CD4-positive, alpha-beta memory T cell (primary cell): ENCODE measurements at regions of chr5 and their contacts with region 1.

Region 1: GRCh38 chr5:142874537-142874936 is 104.4 kb downstream of the ARHGAP26 start:
- DNase-seq: no peak
- H3K4me3 ChIP-seq: no peak overlapping the region
- H3K4me3 Mint-ChIP-seq: no peak overlapping the region
- H3K27ac ChIP-seq: no peak overlapping the region
- H3K27ac Mint-ChIP-seq: no peak overlapping the region
- H3K4me1 ChIP-seq: no peaks in the 10 kb centered on the region
- H3K4me1 Mint-ChIP-seq: peaks cover 0 to 3% (median 0%) of the 10 kb centered on the region in 4 donors
- H3K27me3 ChIP-seq: no peaks in the 10 kb centered on the region
- H3K27me3 Mint-ChIP-seq: no peaks in the 10 kb centered on the region

Region 2: GRCh38 chr5:142888469-142889085 is 14.0 kb after region 1 on chr5:
- CTCF ChIA-PET with region 1: interaction called, 21 read pairs
- POLR2A ChIA-PET with region 1: no interaction called
- intact Hi-C with region 1: no loop called
- DNase-seq: peak in 4 of 5 donors; percentile 13 to 26 (median 20)
- H3K4me3 ChIP-seq: no peak overlapping the region
- H3K4me3 Mint-ChIP-seq: no peak overlapping the region
- H3K27ac ChIP-seq: no peak overlapping the region
- H3K27ac Mint-ChIP-seq: peak overlapping the region in 1 of 7 donors; percentile 39
- H3K4me1 ChIP-seq: no peaks in the 10 kb centered on the region
- H3K4me1 Mint-ChIP-seq: peaks cover 0 to 4% (median under 1%) of the 10 kb centered on the region in 4 donors
- H3K27me3 ChIP-seq: no peaks in the 10 kb centered on the region
- H3K27me3 Mint-ChIP-seq: no peaks in the 10 kb centered on the region

Region 3: GRCh38 chr5:143002459-143003328 is 128.2 kb after region 1 on chr5:
- CTCF ChIA-PET with region 1: no interaction called
- POLR2A ChIA-PET with region 1: no interaction called
- intact Hi-C with region 1: no loop called
- DNase-seq: peak; percentile 72 to 88 (median 75)
- H3K4me3 ChIP-seq: no peak overlapping the region
- H3K4me3 Mint-ChIP-seq: peak overlapping the region; percentile 40 to 79 (median 61)
- H3K27ac ChIP-seq: peak overlapping the region; percentile 77
- H3K27ac Mint-ChIP-seq: peak overlapping the region; percentile 87 to 98 (median 96)
- H3K4me1 ChIP-seq: peaks cover 54% of the 10 kb centered on the region
- H3K4me1 Mint-ChIP-seq: peaks cover 46 to 76% (median 57%) of the 10 kb centered on the region in 4 donors
- H3K27me3 ChIP-seq: no peaks in the 10 kb centered on the region
- H3K27me3 Mint-ChIP-seq: no peaks in the 10 kb centered on the region